OCI-LY7 (cell line): ENCODE measurements at regions of chr1 and their contacts with region 1.

Region 1: GRCh38 chr1:215376544-215377264 is 190.4 kb upstream of the KCTD3 start:
- DNase-seq: no peak
- H3K4me3 ChIP-seq: no peak overlapping the region
- H3K27ac ChIP-seq: no peak overlapping the region
- H3K4me1 ChIP-seq: no peaks in the 10 kb centered on the region
- CTCF ChIP-seq: no peak

Region 2: GRCh38 chr1:215444715-215445414 is 68.2 kb after region 1 on chr1:
- CTCF ChIA-PET with region 1: no interaction called
- POLR2A ChIA-PET with region 1: no interaction called
- intact Hi-C with region 1: no loop called
- DNase-seq: no peak
- H3K4me3 ChIP-seq: no peak overlapping the region
- H3K27ac ChIP-seq: no peak overlapping the region
- H3K4me1 ChIP-seq: no peaks in the 10 kb centered on the region
- CTCF ChIP-seq: no peak

Region 3: DNA sequence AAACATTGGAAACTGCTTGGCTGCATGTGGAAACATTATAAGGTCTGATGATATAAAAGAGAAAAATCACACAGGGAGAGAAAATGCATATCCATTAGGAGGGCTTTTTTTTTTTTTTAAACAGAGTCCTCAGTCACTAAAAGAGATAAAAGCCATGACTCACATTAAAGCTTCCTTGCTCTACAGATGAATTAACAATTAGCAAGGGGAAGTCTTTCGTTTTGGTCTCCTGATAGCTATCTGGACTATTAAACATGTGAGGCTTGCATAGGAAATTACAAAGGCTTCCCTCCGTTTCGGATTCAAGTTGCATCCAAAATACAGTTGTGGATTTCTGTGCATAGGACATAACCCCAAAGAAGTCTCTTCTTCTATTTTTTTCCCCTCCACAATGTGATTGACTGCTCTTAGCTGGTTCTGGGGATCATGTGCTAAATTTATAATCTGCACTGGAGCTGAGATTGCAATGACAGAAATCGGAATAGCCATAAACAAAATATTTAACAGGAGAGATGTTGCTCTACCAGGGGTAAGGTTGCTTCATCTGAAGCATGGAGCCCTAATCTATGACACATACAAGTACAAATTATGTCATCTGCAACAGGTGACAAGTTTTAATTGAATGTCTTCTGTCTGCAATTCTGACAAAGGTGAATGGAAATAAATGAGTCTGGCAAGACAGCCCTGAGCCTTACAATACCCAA is 1199.7 kb after region 1 on chr1:
- CTCF ChIA-PET with region 1: no interaction called
- POLR2A ChIA-PET with region 1: no interaction called
- intact Hi-C with region 1: loop called (anchors 10 kb)
- DNase-seq: no peak
- H3K4me3 ChIP-seq: no peak overlapping the region
- H3K27ac ChIP-seq: no peak overlapping the region
- H3K4me1 ChIP-seq: no peaks in the 10 kb centered on the region
- CTCF ChIP-seq: no peak